Heart right ventricle (tissue), 16 donors: ENCODE measurements at regions of chr11 and their contacts with region 1.

Region 1: GRCh38 chr11:9927670-9928069 is 263.8 kb downstream of the SWAP70 start:
- DNase-seq: no peak
- ATAC-seq: no peak
- H3K4me3 ChIP-seq: no peak overlapping the region
- H3K27ac ChIP-seq: no peak overlapping the region
- H3K4me1 ChIP-seq: peaks cover 0 to 7% (median 0%) of the 10 kb centered on the region in 9 donors
- H3K27me3 ChIP-seq: no peaks in the 10 kb centered on the region
- CTCF ChIP-seq: no peak

Region 2: DNA sequence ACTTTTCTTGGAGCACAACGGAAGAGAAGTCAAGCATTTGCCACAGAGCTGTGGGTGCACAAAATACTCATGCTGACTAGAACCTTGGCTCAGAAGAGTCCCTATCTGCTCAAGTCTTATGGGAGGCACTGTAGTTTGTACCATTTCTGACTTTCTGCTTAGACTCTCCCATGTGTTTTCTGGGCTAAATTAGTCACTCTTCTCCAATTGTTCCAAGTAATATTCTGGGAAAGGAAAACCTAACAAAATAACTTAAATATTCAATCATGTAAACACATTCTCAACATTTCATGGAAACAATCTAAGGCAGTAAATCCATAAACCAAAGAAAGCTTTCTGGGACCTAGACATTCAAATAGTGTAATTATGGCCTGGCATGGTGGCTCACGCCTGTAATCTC is 43.1 kb before region 1 on chr11:
- intact Hi-C with region 1: loop called in 1 of 10 experiments (anchors 2 kb)
- DNase-seq: no peak
- ATAC-seq: no peak
- H3K4me3 ChIP-seq: no peak overlapping the region
- H3K27ac ChIP-seq: no peak overlapping the region
- H3K4me1 ChIP-seq: no peaks in the 10 kb centered on the region
- H3K27me3 ChIP-seq: no peaks in the 10 kb centered on the region
- CTCF ChIP-seq: no peak